ENCODE measurements at regions of chr2 and their contacts with region 1.

Region 1: DNA sequence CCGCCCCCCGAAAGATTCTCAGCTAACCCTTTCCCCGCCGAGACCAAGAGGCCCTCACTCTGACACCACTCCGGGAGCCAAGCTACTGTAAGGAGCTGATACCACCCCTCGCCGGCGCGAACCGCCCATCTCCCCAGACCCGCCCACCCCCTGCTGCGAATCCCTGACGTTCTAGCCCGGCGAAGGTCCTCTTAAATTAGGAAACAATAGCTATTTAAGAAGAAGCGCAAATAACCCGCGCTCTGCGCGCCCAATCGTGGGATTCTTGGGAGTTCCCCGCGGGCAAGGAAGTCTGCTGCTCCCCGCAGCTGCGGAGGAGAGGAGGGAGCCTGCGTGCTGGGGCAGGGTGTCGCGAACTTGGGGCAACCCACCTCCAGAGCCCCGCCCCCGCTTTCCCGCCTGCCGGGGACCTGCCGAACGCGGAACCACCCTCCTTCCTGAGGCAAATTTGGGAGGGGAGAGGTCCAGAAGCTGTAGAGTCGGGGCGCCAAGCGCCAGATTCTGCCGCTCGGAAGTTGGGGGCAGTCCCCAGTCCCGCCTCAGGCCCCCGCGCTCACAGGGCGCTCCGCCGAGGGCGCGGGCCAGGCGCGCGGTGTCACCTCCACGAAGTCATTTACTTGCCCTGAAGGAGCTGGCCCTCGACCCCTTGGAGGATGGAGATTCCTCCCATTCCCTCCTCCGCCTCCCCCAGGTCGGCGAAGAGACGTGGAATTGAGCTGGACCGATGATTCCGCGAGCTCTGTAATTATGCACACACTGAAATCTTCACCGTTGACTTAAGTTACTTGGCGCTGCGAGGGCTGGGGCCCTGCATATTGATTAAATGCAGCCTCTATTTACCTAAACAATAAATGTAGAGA is 8.4 kb upstream of the SP9 start:
- DNase-seq: peak; percentile 85 to 86 (median 85)
- ATAC-seq: peak; percentile 87
- H3K4me3 ChIP-seq: peak overlapping the region; percentile 49
- H3K27ac ChIP-seq: peak overlapping the region; percentile 54
- H3K4me1 ChIP-seq: peaks cover 8 to 24% of the 10 kb centered on the region in 2 experiments; a peak in 3 of 5 replicates
- H3K27me3 ChIP-seq: peaks cover 26 to 28% of the 10 kb centered on the region in 2 experiments
- CTCF ChIP-seq: no peak
- EP300 ChIP-seq: no peak
- POLR2A ChIP-seq: peak; percentile 64; the same call in 1 of the 2 replicates
- RAD21 ChIP-seq: no peak

Region 2: DNA sequence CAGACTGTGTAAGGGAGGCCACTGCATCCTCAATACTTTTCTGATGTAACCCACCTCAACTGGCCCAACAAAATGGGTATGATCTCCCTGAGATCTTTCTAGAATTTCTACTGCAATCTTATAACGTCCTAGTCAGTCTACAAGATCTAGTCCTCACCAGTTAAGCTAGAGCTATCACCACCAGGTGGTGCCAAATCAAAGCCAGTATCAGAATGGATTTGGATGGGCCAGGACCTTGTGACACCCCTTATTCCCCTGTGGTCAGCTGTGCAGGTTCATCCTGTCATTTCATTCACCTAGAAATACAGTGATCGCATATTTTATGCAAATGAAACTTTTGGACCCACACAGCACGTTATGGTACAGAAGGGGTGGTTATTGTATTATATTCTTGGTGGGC is 168.4 kb before region 1 on chr2:
- CTCF ChIA-PET with region 1: no interaction called
- POLR2A ChIA-PET with region 1: no interaction called
- in situ Hi-C with region 1: loop called (anchors 10 kb)
- intact Hi-C with region 1: no loop called
- DNase-seq: peak; percentile 64 to 78 (median 68)
- ATAC-seq: peak; percentile 94
- H3K4me3 ChIP-seq: no peak overlapping the region
- H3K27ac ChIP-seq: no peak overlapping the region
- H3K4me1 ChIP-seq: peaks cover 6 to 18% of the 10 kb centered on the region in 2 experiments; a peak in 4 of 5 replicates
- H3K27me3 ChIP-seq: no peaks in the 10 kb centered on the region
- CTCF ChIP-seq: peak; percentile 68 to 73 (median 70)
- EP300 ChIP-seq: no peak
- POLR2A ChIP-seq: no peak
- RAD21 ChIP-seq: peak; percentile 59 to 88

Measured in K562 (cell line).